Activated T-helper 1 cell treated with anti-CD3 and anti-CD28 coated beads, Interleukin-12 subunit alpha, Interleukin-12 subunit beta, Interleukin-2, Interleukin-4 antibody, amounts not matched to agents 30 ng/mL and 10 ng/mL and 1 ng/mL, durations not matched to agents 14 hours and 24 hours and 36 hours (primary cell): ENCODE measurements at regions of chr17 and their contacts with region 1.

Region 1: GRCh38 chr17:65137021-65137991 is at the start of gene RGS9:
- DNase-seq: peak; percentile 85
- H3K4me3 Mint-ChIP-seq: peak within 1 kb of the TSS; percentile 86
- H3K27ac Mint-ChIP-seq: peak within 1 kb of the TSS; percentile 49
- H3K4me1 Mint-ChIP-seq: peaks cover 33% of the 10 kb centered on the region
- H3K27me3 Mint-ChIP-seq: peaks cover 24% of the 10 kb centered on the region
- total RNA-seq, gene RGS9: 1.1 and 1.8 TPM in 2 replicates

Region 2: DNA sequence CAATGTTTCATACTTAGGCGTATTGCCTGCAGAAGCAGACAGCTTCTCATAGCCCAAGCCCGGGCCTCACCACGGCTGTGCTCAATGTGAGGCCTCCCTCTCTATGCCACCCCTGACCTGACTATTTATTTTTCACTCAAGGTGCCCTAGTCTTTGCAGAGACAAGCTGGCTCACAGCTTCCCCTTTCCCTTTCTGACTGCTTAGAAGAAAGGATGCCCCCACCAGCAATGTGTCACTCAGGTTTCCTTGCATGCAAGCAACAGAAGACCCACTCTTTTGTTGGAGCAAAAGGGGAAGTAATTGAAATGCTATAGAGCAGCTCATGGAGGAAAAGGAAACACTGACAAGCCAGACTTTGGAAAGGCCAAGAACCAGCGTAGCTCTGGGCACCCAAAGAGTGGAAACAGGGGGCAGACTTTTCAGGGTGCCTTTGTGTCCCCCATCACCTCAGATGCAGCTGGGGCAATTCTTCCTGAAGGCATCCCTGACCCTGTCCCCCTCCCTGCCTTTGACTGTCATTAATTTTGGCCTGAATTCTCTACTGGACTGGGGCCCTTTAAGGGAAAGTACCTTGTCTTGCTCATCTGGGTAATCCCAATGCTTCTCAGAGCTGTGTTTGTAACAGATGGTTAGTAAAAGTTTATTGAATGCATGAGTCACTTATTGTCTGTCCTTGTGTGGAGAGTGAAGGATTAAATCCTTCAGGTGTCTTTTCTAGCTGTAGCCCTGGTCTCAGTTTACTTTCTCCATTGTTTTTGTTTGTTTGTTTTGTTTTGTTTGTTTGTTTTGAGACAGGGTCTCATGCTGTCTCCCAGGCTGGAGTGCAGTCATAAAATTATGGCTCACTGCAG is 17.7 kb after region 1 on chr17:
- intact Hi-C with region 1: no loop called
- DNase-seq: no peak
- H3K4me3 Mint-ChIP-seq: no peak overlapping the region
- H3K27ac Mint-ChIP-seq: no peak overlapping the region
- H3K4me1 Mint-ChIP-seq: peaks cover 15% of the 10 kb centered on the region
- H3K27me3 Mint-ChIP-seq: peaks cover 6% of the 10 kb centered on the region

Region 3: GRCh38 chr17:65181237-65182061 is 44.1 kb after region 1 on chr17:
- intact Hi-C with region 1: loop called (anchors 1 kb)
- DNase-seq: peak; percentile 32
- H3K4me3 Mint-ChIP-seq: peak overlapping the region; percentile 31
- H3K27ac Mint-ChIP-seq: peak overlapping the region; percentile 78
- H3K4me1 Mint-ChIP-seq: peaks cover 79% of the 10 kb centered on the region
- H3K27me3 Mint-ChIP-seq: peaks cover 11% of the 10 kb centered on the region

Region 4: DNA sequence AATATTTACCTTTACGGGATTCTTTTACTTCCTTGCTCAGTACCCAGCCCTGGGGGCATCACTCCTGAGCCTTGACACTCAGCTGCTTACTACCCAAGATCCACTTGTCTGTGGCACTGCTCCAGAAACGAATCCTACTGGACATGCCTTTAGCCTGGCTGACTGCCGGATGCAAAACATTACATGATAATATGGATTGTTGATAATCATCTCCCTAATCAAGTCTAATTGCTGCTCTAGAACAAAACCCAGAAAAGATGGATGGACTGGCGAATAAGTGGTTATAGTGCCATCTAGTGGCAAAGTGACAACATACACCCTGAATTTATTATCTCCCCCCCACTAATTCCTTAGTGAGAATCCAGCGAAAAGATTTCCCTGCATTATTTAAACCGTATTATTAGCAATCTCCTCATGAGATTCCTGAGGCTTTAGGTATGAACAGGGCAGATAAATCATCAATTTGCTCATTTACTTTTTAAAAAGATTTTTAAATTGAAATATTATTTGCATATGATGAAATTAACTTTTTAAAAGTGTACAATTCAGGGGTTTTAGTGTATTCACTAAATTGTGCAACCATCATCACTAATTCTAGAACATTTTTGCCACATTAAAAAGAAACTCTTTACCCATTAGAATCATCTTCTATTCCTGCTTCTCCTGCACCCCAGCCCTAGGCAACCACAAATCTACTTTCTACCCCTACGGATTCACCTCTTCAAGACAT is 61.5 kb after region 1 on chr17:
- intact Hi-C with region 1: loop called (anchors 1 kb)
- DNase-seq: no peak
- H3K4me3 Mint-ChIP-seq: no peak overlapping the region
- H3K27ac Mint-ChIP-seq: peak overlapping the region; percentile 9
- H3K4me1 Mint-ChIP-seq: peaks cover 14% of the 10 kb centered on the region
- H3K27me3 Mint-ChIP-seq: peaks cover 6% of the 10 kb centered on the region